ENCODE measurements at regions of chr14 and their contacts with region 1.

Region 1: DNA sequence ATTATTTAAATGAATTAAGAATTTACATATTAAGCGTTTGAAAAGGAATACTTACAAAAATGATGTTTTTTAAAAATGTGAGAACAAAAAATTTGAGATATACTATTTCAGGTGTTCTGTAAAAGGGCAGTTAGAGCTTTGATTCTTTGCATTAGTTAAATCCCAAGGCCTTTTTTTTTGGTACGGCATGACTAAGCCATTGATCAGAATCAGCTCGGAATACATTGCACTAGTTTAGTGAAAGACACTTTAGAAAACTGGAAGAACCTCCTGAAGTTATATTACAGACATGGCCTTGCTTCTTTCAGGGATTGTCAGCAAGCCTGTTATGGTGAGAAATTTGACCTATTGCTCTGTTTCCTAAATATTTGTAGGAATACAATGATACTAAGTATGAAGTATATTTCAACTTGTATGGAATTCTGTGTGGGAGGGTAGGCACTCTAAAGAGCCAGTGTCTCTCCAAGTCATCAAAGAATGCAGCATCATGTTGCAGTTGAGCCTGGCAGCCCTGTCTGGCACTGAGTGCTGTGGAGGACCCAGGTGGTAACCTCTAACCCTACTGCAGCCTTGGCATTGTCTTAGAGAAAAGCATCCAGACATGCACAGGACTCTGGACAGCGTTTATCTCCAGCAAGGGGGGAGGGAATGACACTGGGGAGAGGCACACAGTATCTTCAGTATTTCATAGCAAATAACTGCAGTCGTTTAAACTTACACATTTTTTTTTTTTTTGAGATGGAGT is 1.5 kb downstream of the KLC1 start:
- DNase-seq: no peak
- ATAC-seq: no peak
- H3K4me3 ChIP-seq: peak overlapping the region; percentile 75 to 77
- H3K27ac ChIP-seq: peak overlapping the region; percentile 84
- H3K4me1 ChIP-seq: peaks cover 10% of the 10 kb centered on the region
- H3K27me3 ChIP-seq: no peaks in the 10 kb centered on the region
- CTCF ChIP-seq: no peak

Region 2: DNA sequence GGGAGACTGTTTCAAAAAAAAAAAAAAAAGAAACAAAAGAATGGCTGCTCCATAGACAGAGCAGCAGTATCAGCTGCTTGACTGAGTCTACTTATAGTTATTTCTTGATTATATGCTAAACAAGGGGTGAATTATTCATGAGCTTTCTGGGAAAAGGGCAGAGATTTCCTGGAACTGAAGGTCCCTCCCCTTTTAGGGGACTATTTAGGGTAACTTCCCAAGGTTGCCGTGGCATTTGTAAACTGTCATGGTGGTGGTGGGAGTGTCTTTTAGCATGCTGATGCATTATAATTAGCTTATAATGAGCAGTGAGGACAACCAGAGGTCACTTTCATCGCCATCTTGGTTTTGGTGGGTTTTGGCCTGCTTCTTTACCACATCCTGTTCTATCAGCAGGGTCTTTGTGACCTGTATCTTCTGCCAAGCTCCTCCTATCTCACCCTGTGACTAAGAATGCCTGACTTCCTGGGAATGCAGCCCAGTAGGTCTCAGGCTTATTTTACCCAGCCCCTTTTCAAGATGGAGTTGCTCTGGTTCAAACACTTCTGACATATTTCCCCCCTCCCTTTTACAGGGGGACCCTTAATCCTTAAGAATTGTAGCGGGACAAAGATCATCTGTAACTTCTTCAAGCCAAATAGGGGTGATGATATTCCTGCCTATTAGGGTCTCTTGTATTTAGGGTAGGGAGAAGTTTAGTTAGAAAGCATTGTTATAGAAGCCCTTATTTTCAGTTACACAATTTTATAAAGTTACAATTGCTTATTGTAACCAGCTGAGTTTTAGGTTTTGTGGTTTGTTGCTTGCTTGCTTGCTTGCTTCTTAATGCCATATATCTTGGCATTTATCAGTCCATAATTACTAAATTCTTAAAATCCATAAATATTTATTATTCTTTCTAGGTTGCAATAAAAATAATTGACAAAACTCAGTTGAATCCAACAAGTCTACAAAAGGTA is 202.8 kb before region 1 on chr14:
- CTCF ChIA-PET with region 1: no interaction called
- POLR2A ChIA-PET with region 1: no interaction called
- in situ Hi-C with region 1: no loop called
- intact Hi-C with region 1: no loop called
- DNase-seq: no peak
- ATAC-seq: no peak
- H3K4me3 ChIP-seq: no peak overlapping the region
- H3K27ac ChIP-seq: no peak overlapping the region
- H3K4me1 ChIP-seq: peaks cover 5% of the 10 kb centered on the region
- H3K27me3 ChIP-seq: no peaks in the 10 kb centered on the region
- CTCF ChIP-seq: no peak

Region 3: GRCh38 chr14:103613517-103613916 is 17.0 kb before region 1 on chr14:
- CTCF ChIA-PET with region 1: no interaction called
- POLR2A ChIA-PET with region 1: interaction called, 12 read pairs
- in situ Hi-C with region 1: no loop called
- intact Hi-C with region 1: no loop called
- DNase-seq: no peak
- ATAC-seq: 0 out of 2 replicates have a peak, but pooled peaks have one; percentile 62
- H3K4me3 ChIP-seq: no peak overlapping the region
- H3K27ac ChIP-seq: no peak overlapping the region
- H3K4me1 ChIP-seq: no peaks in the 10 kb centered on the region
- H3K27me3 ChIP-seq: no peaks in the 10 kb centered on the region
- CTCF ChIP-seq: no peak; the same call in 1 of the 2 replicates

Region 4: DNA sequence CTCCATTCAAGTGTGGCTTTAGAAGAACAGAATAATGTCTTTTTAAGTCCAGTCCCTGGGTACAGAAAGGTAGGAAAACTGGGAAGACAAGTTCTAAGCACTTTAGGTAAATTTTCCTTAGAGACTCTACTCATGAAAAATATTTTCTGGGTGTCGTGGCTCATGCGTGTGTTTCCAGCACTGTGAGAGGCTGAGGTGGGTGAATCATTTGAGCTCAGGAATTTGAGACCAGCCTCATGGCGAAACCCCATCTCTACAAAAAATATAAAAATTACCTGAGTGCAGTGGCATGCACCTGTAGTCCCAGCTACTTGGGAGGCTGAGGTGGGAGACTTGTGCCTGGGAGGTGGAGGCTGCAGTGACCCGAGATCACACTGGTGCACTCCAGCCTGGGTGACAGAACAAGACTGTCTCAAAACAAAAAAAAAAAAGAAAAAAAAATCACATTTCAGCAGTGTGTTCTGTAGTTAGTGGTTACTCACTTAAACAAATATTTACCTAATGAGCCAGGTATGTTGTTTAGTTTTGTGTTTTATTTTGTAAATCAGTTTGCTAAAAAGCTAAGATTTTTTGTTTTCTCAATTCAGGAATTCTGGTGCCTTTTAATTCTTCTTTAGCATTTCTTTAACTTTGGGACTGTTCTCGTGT is 364.1 kb after region 1 on chr14:
- CTCF ChIA-PET with region 1: no interaction called
- POLR2A ChIA-PET with region 1: interaction called, 12 read pairs
- in situ Hi-C with region 1: no loop called
- intact Hi-C with region 1: no loop called
- DNase-seq: no peak
- ATAC-seq: no peak
- H3K4me3 ChIP-seq: no peak overlapping the region
- H3K27ac ChIP-seq: no peak overlapping the region
- H3K4me1 ChIP-seq: no peaks in the 10 kb centered on the region
- H3K27me3 ChIP-seq: no peaks in the 10 kb centered on the region; the same call in 1 of the 2 replicates
- CTCF ChIP-seq: no peak